A673 (cell line): ENCODE measurements at regions of chr17 and their contacts with region 1.

Region 1: DNA sequence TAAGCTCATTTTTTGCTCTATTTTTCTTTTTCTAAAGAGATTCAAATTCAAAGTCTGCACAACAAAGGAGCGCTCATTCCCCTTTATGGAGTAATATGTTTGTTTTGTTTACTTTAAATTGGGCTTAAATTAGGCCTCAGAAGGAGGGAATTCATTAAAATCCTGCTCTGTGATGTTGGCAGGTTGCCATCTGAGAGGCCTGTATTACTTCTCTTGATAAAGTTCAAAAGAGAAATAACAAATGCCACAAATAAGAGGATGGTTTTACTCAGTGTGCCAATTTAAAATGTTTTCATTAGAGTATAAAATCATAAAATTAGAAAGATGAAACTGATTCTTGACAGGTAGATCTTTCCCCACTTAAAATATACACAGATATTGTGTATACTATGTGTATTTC is 54.5 kb upstream of the HLF start:
- DNase-seq: peak; percentile 61
- H3K4me3 ChIP-seq: no peak overlapping the region
- H3K27ac ChIP-seq: peak overlapping the region; percentile 91
- H3K4me1 ChIP-seq: peaks cover 63% of the 10 kb centered on the region
- H3K27me3 ChIP-seq: no peaks in the 10 kb centered on the region
- CTCF ChIP-seq: no peak

Region 2: GRCh38 chr17:55067697-55068439 is 142.4 kb before region 1 on chr17:
- CTCF ChIA-PET with region 1: no interaction called
- POLR2A ChIA-PET with region 1: no interaction called
- intact Hi-C with region 1: loop called (anchors 2 kb)
- DNase-seq: peak; percentile 37
- H3K4me3 ChIP-seq: no peak overlapping the region
- H3K27ac ChIP-seq: no peak overlapping the region
- H3K4me1 ChIP-seq: peaks cover 55% of the 10 kb centered on the region
- H3K27me3 ChIP-seq: no peaks in the 10 kb centered on the region
- CTCF ChIP-seq: no peak

Region 3: GRCh38 chr17:55238179-55238930 is 28.1 kb after region 1 on chr17:
- CTCF ChIA-PET with region 1: no interaction called
- POLR2A ChIA-PET with region 1: interaction called, 17 read pairs
- intact Hi-C with region 1: no loop called
- DNase-seq: peak; percentile 98
- H3K4me3 ChIP-seq: peak overlapping the region; percentile 53
- H3K27ac ChIP-seq: peak overlapping the region; percentile 77
- H3K4me1 ChIP-seq: peaks cover 28% of the 10 kb centered on the region
- H3K27me3 ChIP-seq: no peaks in the 10 kb centered on the region
- CTCF ChIP-seq: no peak

Region 4: DNA sequence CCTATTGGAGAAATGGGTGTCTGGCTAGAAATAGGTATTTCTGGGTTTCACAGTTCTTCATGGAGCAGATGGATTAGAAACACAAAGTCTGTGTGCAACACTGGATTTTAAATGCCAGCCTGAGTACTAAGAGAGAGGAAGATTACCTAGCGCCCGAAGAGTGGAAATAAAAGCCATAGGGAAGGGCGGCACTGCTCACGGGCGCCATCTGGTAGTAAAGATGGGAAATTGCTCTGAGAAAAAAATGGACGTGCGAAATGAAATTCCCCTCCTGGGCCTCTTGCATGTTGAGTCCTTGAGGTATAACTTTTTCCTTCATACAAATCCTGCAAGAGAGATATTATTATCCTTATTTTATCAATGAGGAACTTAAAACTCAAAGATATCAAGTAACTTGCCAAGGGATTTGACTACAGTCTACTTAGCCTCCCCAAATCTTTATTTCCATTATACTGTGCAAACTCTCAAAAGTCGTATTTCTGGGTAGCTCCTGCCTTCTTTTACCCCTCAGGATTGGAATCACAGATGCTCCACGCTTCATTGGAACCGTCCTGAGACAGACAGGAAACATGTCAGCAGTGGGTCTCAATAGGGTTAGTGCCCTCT is 138.6 kb after region 1 on chr17:
- CTCF ChIA-PET with region 1: interaction called, 8 read pairs
- POLR2A ChIA-PET with region 1: no interaction called
- intact Hi-C with region 1: loop called (anchors 2 kb)
- DNase-seq: peak; percentile 83
- H3K4me3 ChIP-seq: no peak overlapping the region
- H3K27ac ChIP-seq: no peak overlapping the region
- H3K4me1 ChIP-seq: peaks cover 19% of the 10 kb centered on the region
- H3K27me3 ChIP-seq: no peaks in the 10 kb centered on the region
- CTCF ChIP-seq: peak; percentile 91